ENCODE measurements at regions of chr7 and their contacts with region 1.

Region 1: DNA sequence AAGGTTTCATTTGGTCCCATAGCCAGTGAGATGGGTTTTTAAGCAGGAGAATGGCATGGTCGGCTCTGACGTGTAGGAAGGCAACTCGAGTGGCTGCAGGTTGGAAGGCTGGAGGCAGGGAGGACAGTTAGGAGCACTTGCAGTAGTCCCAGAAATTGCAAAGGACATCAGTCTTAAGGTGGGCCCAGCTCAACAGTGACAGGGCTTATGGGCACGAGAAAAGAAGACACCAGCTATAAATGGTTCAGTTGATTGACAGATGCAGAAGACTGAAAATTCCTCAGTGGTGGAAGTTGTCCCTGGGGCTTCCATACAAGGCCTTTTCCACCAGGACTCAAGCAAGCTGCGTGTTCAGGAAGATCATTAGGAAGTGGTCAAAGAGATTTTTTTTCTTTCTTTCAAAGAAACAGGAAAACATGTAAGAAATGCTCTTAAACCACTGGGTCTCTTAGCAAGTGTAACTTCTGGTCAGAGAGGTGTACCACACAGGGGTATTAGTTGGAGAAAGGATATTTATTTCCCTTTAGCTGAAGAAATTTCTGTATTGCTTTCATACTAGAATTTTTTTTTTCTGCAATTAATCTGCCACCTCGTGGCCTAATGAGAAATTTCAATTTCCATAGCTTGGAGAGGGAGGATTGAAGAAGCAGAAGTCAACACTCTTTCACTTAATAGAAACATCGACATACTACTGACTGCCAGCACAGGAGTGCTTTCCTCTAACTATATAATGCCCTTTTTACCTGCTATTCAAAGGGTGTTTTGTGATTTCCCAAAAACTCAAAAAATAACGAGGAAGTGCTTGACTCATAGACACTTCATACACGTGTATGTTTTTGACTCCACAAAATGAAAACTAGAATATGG is 177.4 kb upstream of the NAMPT start:
- DNase-seq: peak; percentile 39
- ATAC-seq: peak; percentile 83
- H3K4me3 ChIP-seq: no peak overlapping the region
- H3K27ac ChIP-seq: no peak overlapping the region
- H3K4me1 ChIP-seq: peaks cover 12% of the 10 kb centered on the region
- H3K27me3 ChIP-seq: no peaks in the 10 kb centered on the region
- CTCF ChIP-seq: peak; percentile 40 to 56 (median 47); a peak in 5 of 6 replicates
- EP300 ChIP-seq: no peak
- POLR2A ChIP-seq: no peak
- RAD21 ChIP-seq: peak; percentile 79

Region 2: DNA sequence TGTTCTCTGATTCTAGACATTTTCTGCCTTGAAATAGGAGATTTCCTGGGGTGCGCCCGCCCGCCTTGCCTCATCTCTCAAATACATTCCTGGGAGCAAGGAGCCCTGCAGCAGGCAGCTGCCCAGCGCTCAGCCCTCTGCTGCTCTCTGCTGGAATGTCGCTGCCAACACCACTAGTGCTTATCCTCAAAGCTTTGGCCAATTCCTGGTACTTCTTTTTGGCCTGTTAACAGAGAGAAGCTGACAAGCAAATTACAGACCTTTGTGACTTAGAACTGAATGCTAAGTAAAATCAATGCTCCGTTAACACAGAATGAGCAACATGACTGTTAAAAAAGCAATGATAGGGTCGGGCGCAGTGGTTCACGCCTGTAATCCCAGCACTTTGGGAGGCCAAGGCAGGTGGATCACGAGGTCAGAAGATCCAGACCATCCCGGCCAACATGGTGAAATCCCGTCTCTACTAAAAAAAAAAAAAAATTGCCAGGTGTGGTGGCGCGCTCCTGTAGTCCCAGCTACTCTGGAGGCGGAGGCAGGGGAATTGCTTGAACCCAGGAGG is 308.3 kb before region 1 on chr7:
- CTCF ChIA-PET with region 1: interaction called, 5 read pairs
- POLR2A ChIA-PET with region 1: no interaction called
- RAD21 ChIA-PET with region 1: interaction called, 8 read pairs
- SMC1A ChIA-PET with region 1: interaction called, 18 read pairs
- in situ Hi-C with region 1: no loop called
- intact Hi-C with region 1: no loop called
- DNase-seq: peak; percentile 45
- ATAC-seq: peak; percentile 94
- H3K4me3 ChIP-seq: no peak overlapping the region
- H3K27ac ChIP-seq: no peak overlapping the region
- H3K4me1 ChIP-seq: peaks cover 26% of the 10 kb centered on the region
- H3K27me3 ChIP-seq: no peaks in the 10 kb centered on the region
- CTCF ChIP-seq: peak; percentile 94 to 97 (median 96)
- EP300 ChIP-seq: no peak
- POLR2A ChIP-seq: no peak
- RAD21 ChIP-seq: peak; percentile 99

Region 3: DNA sequence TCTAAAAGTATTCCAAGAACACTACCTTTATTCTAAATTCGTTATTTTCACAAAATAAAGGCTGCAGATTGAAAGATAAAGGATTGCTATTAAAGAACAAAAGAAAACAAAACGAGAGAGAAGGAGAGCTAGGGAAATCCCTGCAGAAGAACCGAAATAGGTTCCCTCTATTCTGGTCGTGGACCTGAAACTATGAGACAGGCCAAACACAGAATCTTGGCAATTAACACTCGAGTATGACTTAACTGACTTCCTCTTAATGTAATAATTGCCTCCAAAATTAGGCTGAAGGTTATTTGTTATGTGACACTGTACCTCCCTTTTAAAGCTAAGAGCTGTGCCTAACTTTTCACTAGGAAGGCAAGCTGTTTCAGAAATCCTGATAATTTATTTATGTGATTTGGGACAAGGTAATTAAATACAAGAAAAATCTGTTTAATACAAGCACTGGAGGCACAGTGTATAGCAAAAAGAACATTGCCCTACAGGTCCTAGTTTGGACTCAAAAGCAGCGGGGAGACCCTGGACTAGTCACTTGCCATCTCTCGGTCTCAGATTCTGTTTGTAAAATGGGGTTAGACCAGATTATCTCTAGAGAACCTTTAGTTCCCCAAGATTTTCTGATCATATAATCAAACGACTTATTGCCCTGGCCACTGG is 189.1 kb before region 1 on chr7:
- CTCF ChIA-PET with region 1: interaction called, 23 read pairs
- POLR2A ChIA-PET with region 1: interaction called, 3 read pairs
- RAD21 ChIA-PET with region 1: interaction called, 14 read pairs
- SMC1A ChIA-PET with region 1: interaction called, 31 read pairs
- in situ Hi-C with region 1: no loop called
- intact Hi-C with region 1: no loop called
- DNase-seq: peak; percentile 50
- ATAC-seq: peak; percentile 74
- H3K4me3 ChIP-seq: peak overlapping the region; percentile 28; the same call in 1 of the 2 replicates
- H3K27ac ChIP-seq: no peak overlapping the region
- H3K4me1 ChIP-seq: peaks cover 13% of the 10 kb centered on the region; the same call in 1 of the 2 replicates
- H3K27me3 ChIP-seq: no peaks in the 10 kb centered on the region
- CTCF ChIP-seq: no peak
- EP300 ChIP-seq: peak; percentile 38 to 45; a peak in 2 of 4 replicates
- POLR2A ChIP-seq: no peak
- RAD21 ChIP-seq: no peak

Region 4: DNA sequence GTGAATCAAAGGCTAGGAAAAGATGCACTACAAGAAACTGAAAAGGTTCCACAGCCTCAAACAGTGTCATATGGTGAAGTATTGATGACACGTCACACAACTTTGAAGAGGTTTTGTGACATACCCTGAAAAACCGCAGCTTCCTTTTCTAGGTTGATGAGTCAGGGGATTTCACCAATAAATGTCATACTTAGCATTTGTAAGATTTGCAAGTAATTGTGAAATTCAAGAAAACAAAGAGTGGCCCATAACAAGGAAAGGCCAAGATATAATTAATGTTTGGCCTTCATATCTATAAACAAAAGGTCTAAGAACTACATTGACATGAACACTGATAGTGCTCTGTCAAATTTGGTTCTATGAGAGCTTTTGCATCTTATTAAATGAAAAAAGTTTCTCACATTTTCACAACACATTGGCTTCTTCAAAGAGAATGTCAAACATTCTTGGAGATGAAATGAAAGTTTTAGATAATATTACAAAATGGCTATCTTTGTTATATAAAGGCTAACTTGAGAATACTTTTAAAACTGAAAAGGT is 115.5 kb before region 1 on chr7:
- CTCF ChIA-PET with region 1: interaction called, 7 read pairs
- POLR2A ChIA-PET with region 1: no interaction called
- RAD21 ChIA-PET with region 1: interaction called, 18 read pairs
- SMC1A ChIA-PET with region 1: interaction called, 14 read pairs
- in situ Hi-C with region 1: no loop called
- intact Hi-C with region 1: loop called (anchors 5 kb)
- DNase-seq: peak; percentile 92
- ATAC-seq: peak; percentile 86
- H3K4me3 ChIP-seq: no peak overlapping the region
- H3K27ac ChIP-seq: peak overlapping the region; percentile 80
- H3K4me1 ChIP-seq: peaks cover 20% of the 10 kb centered on the region
- H3K27me3 ChIP-seq: no peaks in the 10 kb centered on the region
- CTCF ChIP-seq: no peak
- EP300 ChIP-seq: peak; percentile 99
- POLR2A ChIP-seq: no peak
- RAD21 ChIP-seq: no peak

Region 5: GRCh38 chr7:106384371-106384770 is 77.9 kb before region 1 on chr7:
- CTCF ChIA-PET with region 1: interaction called, 12 read pairs
- POLR2A ChIA-PET with region 1: interaction called, 3 read pairs
- RAD21 ChIA-PET with region 1: interaction called, 11 read pairs
- SMC1A ChIA-PET with region 1: interaction called, 3 read pairs
- in situ Hi-C with region 1: no loop called
- intact Hi-C with region 1: no loop called
- DNase-seq: no peak
- ATAC-seq: no peak; the same call in 2 of the 3 replicates
- H3K4me3 ChIP-seq: no peak overlapping the region
- H3K27ac ChIP-seq: no peak overlapping the region
- H3K4me1 ChIP-seq: no peaks in the 10 kb centered on the region
- H3K27me3 ChIP-seq: no peaks in the 10 kb centered on the region
- CTCF ChIP-seq: no peak
- EP300 ChIP-seq: no peak
- POLR2A ChIP-seq: no peak
- RAD21 ChIP-seq: no peak

Region 6: DNA sequence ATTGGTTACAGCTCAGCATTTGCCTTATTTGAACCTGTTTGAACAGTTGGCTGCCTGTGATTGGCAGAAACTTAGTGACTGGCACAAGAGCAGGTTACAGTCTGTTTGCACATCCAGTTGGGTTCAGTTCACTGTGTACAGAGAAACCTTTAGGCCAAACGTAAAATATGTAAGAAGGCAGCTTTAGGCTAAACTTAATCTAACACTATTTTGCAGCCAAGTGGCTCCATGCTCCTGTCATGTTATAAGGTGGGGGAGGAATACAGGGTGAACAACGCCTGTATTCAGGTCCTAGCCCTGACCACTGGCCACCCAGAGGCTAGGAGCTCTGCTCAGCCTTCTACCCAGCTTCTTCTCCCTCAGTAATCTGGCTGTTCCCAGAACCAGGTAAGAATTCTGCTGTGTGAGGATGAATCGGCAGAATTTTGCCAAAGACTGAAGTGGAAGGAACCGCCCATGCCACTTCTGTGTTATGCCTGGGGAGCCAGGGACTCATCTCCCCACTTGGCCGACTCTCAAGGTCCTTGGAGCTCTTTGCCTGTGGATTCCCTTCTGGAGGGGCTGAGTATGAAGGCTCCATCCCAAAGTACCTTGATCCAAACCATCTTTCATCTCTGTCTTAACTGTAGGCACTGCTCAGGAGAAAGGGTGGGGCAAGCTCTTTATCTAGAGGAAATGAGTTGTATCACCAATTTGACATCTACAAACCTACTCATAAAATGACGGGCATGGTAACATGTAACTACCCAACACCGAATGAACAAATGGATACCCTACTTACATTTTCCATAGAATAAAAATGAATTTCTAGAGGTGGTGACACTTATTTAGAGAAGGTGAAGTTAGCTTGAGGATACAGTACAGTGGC is 13.0 kb before region 1 on chr7:
- CTCF ChIA-PET with region 1: interaction called, 13 read pairs
- POLR2A ChIA-PET with region 1: no interaction called
- RAD21 ChIA-PET with region 1: no interaction called
- SMC1A ChIA-PET with region 1: interaction called, 20 read pairs
- in situ Hi-C with region 1: no loop called
- intact Hi-C with region 1: no loop called
- DNase-seq: no peak
- ATAC-seq: no peak
- H3K4me3 ChIP-seq: no peak overlapping the region
- H3K27ac ChIP-seq: no peak overlapping the region
- H3K4me1 ChIP-seq: no peaks in the 10 kb centered on the region
- H3K27me3 ChIP-seq: no peaks in the 10 kb centered on the region
- CTCF ChIP-seq: no peak
- EP300 ChIP-seq: no peak
- POLR2A ChIP-seq: no peak
- RAD21 ChIP-seq: no peak

Region 7: GRCh38 chr7:106542550-106543220 is 80.5 kb after region 1 on chr7:
- CTCF ChIA-PET with region 1: interaction called, 10 read pairs
- POLR2A ChIA-PET with region 1: no interaction called
- RAD21 ChIA-PET with region 1: interaction called, 3 read pairs
- SMC1A ChIA-PET with region 1: interaction called, 5 read pairs
- in situ Hi-C with region 1: no loop called
- intact Hi-C with region 1: no loop called
- DNase-seq: peak; percentile 57
- ATAC-seq: peak; percentile 95
- H3K4me3 ChIP-seq: no peak overlapping the region
- H3K27ac ChIP-seq: no peak overlapping the region
- H3K4me1 ChIP-seq: no peaks in the 10 kb centered on the region; the same call in 1 of the 2 replicates
- H3K27me3 ChIP-seq: no peaks in the 10 kb centered on the region
- CTCF ChIP-seq: peak; percentile 70 to 77 (median 74)
- EP300 ChIP-seq: no peak
- POLR2A ChIP-seq: no peak
- RAD21 ChIP-seq: peak; percentile 94

Region 8: GRCh38 chr7:106668861-106669524 is 206.8 kb after region 1 on chr7:
- CTCF ChIA-PET with region 1: no interaction called
- POLR2A ChIA-PET with region 1: no interaction called
- RAD21 ChIA-PET with region 1: no interaction called
- SMC1A ChIA-PET with region 1: no interaction called
- in situ Hi-C with region 1: no loop called
- intact Hi-C with region 1: no loop called
- DNase-seq: no peak
- ATAC-seq: no peak
- H3K4me3 ChIP-seq: no peak overlapping the region
- H3K27ac ChIP-seq: no peak overlapping the region
- H3K4me1 ChIP-seq: no peaks in the 10 kb centered on the region
- H3K27me3 ChIP-seq: no peaks in the 10 kb centered on the region; a peak in 1 of 4 replicates
- CTCF ChIP-seq: no peak
- EP300 ChIP-seq: no peak
- POLR2A ChIP-seq: no peak
- RAD21 ChIP-seq: no peak

Measured in GM12878 (cell line).